Naive thymus-derived CD4-positive, alpha-beta T cell (primary cell): ENCODE measurements at regions of chr22 and their contacts with region 1.

Region 1: DNA sequence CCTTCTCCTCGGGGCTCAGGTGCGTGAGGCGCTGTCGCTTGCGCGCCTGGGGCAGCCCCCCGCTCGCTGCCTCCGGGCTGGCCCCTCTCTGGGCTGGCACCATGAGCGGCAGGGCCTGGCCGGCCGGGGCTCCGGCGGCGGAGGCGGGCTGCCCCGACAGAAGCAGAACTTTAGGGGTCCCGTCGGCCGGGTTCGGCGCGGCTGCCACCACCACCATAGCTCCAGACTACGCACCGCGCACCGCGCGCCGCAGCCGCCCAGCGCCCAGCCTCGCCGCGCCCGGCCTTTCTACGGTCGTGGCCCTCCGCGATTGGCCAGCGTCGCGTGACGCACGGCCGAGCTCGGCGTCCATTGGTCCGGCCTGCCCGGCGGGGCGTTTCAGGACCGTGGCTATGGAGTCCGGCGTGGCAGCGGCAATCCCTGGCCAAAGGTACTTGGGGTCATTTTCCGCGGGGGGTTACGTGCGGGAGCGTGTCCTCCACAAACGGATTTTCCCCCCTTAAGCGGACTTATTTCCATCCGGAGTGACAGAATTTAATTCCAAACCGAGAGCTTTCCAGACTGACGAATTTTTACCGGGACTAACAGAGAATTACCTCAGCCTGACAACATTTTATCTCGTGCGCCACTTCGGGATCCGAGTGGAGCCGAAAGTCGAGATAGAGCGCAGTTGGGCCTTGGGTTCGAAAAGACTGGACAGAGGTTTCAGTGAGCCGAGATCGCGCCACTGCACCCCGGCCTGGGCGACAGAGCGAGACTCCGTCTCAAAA is at the start of gene XBP1:
- DNase-seq: peak; percentile 82 to 94 (median 88)
- ATAC-seq: peak; percentile 96
- H3K4me3 ChIP-seq: peak within 1 kb of the TSS; percentile 81
- H3K4me3 Mint-ChIP-seq: peak within 1 kb of the TSS; percentile 91 to 99 (median 95)
- H3K27ac ChIP-seq: peak within 1 kb of the TSS; percentile 99
- H3K27ac Mint-ChIP-seq: peak within 1 kb of the TSS; percentile 90 to 100 (median 99)
- H3K4me1 ChIP-seq: peaks cover 24 to 41% of the 10 kb centered on the region in 2 donors
- H3K4me1 Mint-ChIP-seq: peaks cover 26 to 63% (median 50%) of the 10 kb centered on the region in 7 donors
- H3K27me3 ChIP-seq: no peaks in the 10 kb centered on the region
- H3K27me3 Mint-ChIP-seq: no peaks in the 10 kb centered on the region
- total RNA-seq, gene XBP1: 120 to 293 (median 144) TPM

Region 2: DNA sequence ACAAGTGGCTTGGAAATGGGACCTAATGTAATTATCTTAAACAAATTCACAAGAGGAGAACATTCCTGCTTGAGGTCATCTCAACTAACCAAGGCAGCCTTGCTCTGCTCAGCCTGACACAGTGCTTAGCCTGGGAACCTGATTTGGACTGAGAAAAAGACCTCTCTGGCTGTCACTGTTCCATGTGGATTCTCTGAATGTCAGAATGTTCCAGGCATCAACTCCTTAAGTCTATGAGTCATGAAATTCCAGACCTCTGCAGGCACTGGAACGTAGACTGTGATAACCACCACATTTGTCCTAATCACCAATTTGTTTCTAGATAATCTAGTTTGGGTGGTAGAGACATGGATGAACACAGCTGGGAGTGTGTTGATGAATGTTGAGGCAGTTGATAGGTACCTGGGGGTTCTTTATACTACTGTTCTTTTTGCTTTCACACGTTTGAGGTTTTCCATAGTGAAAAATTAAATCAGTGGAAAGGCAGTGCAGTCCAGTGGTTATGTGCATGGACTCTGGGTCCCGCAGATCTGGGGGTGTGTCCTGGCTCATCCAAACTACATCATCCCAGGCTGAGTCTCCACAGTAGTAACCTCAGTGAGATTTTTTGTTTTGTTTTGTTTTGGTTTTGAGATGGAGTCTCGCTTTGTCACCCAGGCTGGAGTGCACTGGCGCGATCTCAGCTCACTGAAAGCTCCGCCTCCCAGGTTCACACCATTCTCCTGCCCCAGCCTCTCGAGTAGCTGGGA is 1268.5 kb before region 1 on chr22:
- CTCF ChIA-PET with region 1: no interaction called
- POLR2A ChIA-PET with region 1: no interaction called
- intact Hi-C with region 1: no loop called
- DNase-seq: no peak
- ATAC-seq: no peak
- H3K4me3 ChIP-seq: no peak overlapping the region
- H3K4me3 Mint-ChIP-seq: no peak overlapping the region
- H3K27ac ChIP-seq: no peak overlapping the region
- H3K27ac Mint-ChIP-seq: no peak overlapping the region
- H3K4me1 ChIP-seq: no peaks in the 10 kb centered on the region
- H3K4me1 Mint-ChIP-seq: no peaks in the 10 kb centered on the region
- H3K27me3 ChIP-seq: no peaks in the 10 kb centered on the region
- H3K27me3 Mint-ChIP-seq: peaks cover 0 to 14% (median 5%) of the 10 kb centered on the region in 5 donors

Region 3: GRCh38 chr22:27919222-27919941 is 881.1 kb before region 1 on chr22 and contains the start of gene PITPNB:
- CTCF ChIA-PET with region 1: no interaction called
- POLR2A ChIA-PET with region 1: interaction called, 8 read pairs
- intact Hi-C with region 1: loop called (anchors 5 to 10 kb)
- DNase-seq: peak; percentile 97 to 100 (median 99)
- ATAC-seq: peak; percentile 95
- H3K4me3 ChIP-seq: peak within 1 kb of the TSS; percentile 84
- H3K4me3 Mint-ChIP-seq: peak within 1 kb of the TSS; percentile 97 to 100 (median 99)
- H3K27ac ChIP-seq: peak within 1 kb of the TSS; percentile 94
- H3K27ac Mint-ChIP-seq: peak within 1 kb of the TSS; percentile 93 to 99 (median 99)
- H3K4me1 ChIP-seq: peaks cover 29 to 32% of the 10 kb centered on the region in 2 donors
- H3K4me1 Mint-ChIP-seq: peaks cover 56 to 85% (median 75%) of the 10 kb centered on the region in 7 donors
- H3K27me3 ChIP-seq: no peaks in the 10 kb centered on the region
- H3K27me3 Mint-ChIP-seq: peaks cover 0 to 4% (median 0%) of the 10 kb centered on the region in 5 donors
- total RNA-seq, gene PITPNB: 56.3 to 98.8 (median 62.8) TPM

Region 4: GRCh38 chr22:28207281-28208030 is 593.0 kb before region 1 on chr22:
- CTCF ChIA-PET with region 1: no interaction called
- POLR2A ChIA-PET with region 1: no interaction called
- intact Hi-C with region 1: no loop called
- DNase-seq: no peak
- ATAC-seq: no peak
- H3K4me3 ChIP-seq: no peak overlapping the region
- H3K4me3 Mint-ChIP-seq: no peak overlapping the region
- H3K27ac ChIP-seq: no peak overlapping the region
- H3K27ac Mint-ChIP-seq: no peak overlapping the region
- H3K4me1 ChIP-seq: no peaks in the 10 kb centered on the region
- H3K4me1 Mint-ChIP-seq: no peaks in the 10 kb centered on the region
- H3K27me3 ChIP-seq: no peaks in the 10 kb centered on the region
- H3K27me3 Mint-ChIP-seq: peaks cover 0 to 16% (median 9%) of the 10 kb centered on the region in 5 donors

Region 5: DNA sequence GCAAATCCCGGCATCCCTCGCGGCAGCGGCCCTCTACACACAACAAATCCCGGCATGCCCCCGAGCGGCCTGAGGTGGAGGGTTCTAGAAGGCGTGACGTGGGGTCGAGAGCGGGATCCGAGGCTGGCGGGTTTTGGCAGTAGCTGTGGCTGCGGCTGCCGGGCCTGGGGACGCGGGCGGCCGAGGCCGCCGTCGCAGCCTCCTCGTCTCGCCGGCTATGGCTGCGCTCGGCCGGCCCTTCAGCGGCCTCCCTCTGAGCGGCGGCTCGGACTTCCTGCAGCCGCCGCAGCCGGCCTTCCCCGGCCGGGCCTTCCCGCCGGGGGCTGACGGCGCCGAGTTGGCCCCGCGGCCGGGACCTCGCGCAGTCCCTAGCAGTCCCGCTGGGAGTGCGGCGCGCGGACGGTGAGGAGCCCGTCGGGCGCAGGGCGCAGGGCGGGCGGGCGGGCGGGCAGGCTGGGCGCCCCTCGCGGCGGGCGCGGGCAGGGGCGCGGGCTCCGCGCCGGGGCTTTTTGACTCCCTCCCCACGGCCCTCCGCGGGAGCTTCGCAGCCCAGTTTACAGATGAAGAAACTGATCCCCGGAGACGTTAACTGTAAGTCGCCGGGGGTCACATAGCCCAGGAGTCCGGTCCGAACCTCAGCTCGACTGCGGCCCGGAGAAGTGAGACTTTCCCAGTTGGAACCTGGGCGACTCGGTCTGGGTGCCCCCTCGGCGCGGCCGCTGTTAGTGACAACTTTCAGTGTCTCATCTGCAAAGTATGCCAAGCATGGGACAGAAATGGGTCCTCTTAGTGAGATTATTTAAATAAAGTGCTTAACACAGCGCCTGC is 27.6 kb before region 1 on chr22 and contains the start of gene CCDC117:
- CTCF ChIA-PET with region 1: no interaction called
- POLR2A ChIA-PET with region 1: interaction called, 31 read pairs
- intact Hi-C with region 1: loop called (anchors 1 kb)
- DNase-seq: peak; percentile 76 to 93 (median 88)
- ATAC-seq: peak; percentile 97
- H3K4me3 ChIP-seq: peak within 1 kb of the TSS; percentile 83
- H3K4me3 Mint-ChIP-seq: peak within 1 kb of the TSS; percentile 84 to 100 (median 97)
- H3K27ac ChIP-seq: peak within 1 kb of the TSS; percentile 91
- H3K27ac Mint-ChIP-seq: peak within 1 kb of the TSS; percentile 86 to 98 (median 91)
- H3K4me1 ChIP-seq: peaks cover 13 to 17% of the 10 kb centered on the region in 2 donors
- H3K4me1 Mint-ChIP-seq: peaks cover 17 to 46% (median 31%) of the 10 kb centered on the region in 7 donors
- H3K27me3 ChIP-seq: no peaks in the 10 kb centered on the region
- H3K27me3 Mint-ChIP-seq: peaks cover 0 to 2% (median 0%) of the 10 kb centered on the region in 5 donors
- total RNA-seq, gene CCDC117: 13.5 to 33.5 (median 21.2) TPM

Region 6: GRCh38 chr22:28810821-28811491 is 10.5 kb after region 1 on chr22:
- CTCF ChIA-PET with region 1: interaction called, 26 read pairs
- POLR2A ChIA-PET with region 1: interaction called, 194 read pairs
- intact Hi-C with region 1: loop called (anchors 1 kb)
- DNase-seq: peak in 7 of 9 donors; percentile 26 to 67 (median 55)
- ATAC-seq: peak; percentile 58
- H3K4me3 ChIP-seq: peak overlapping the region; percentile 54
- H3K4me3 Mint-ChIP-seq: peak overlapping the region; percentile 78 to 91 (median 86)
- H3K27ac ChIP-seq: peak overlapping the region; percentile 62
- H3K27ac Mint-ChIP-seq: peak overlapping the region; percentile 91 to 96 (median 94)
- H3K4me1 ChIP-seq: peaks cover 42 to 58% of the 10 kb centered on the region in 2 donors
- H3K4me1 Mint-ChIP-seq: peaks cover 62 to 89% (median 75%) of the 10 kb centered on the region in 7 donors
- H3K27me3 ChIP-seq: no peaks in the 10 kb centered on the region
- H3K27me3 Mint-ChIP-seq: no peaks in the 10 kb centered on the region

Region 7: DNA sequence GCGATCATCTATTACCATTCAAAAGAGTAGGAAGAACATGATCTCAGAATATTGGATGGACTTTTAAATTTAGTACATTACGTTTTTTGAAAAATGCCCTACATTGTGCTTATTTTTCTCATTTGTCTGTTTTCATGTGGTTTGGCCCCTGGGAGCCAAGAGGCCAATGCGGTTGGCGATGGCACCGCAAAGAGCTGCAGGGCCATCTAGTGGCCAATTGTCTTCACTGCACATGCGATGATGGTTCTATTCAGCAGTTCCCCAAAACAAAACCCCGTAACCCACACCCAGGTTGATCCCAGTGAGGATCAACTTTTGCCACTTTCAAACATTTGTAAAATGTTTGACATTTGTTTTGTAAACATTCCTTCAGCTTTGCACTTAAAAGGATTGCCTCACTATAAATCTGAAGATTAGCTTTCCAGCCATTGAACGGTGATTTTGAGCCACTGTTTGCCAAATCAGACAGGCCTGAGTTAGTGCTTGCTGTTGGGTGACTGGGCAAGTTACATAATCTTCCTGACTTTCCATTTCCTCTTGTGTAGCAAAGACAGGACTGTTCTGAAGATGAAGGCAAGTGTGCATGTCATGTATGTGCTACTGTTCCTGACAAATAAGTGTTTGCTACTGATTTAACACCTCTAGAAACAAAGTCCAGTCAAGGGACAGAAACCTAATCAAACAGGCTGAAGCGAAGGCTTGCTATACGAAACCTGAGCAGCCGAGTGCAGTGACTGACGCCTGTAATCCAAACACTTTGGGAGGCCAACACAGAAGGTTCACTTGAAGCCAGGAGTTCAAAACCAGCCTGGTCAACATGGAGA is 29.1 kb after region 1 on chr22:
- CTCF ChIA-PET with region 1: interaction called, 11 read pairs
- POLR2A ChIA-PET with region 1: interaction called, 105 read pairs
- intact Hi-C with region 1: loop called (anchors 1 kb)
- DNase-seq: peak; percentile 50 to 74 (median 69)
- ATAC-seq: peak; percentile 95
- H3K4me3 ChIP-seq: no peak overlapping the region
- H3K4me3 Mint-ChIP-seq: peak overlapping the region; percentile 39 to 75 (median 59)
- H3K27ac ChIP-seq: no peak overlapping the region
- H3K27ac Mint-ChIP-seq: peak overlapping the region in 6 of 9 donors; percentile 33 to 87 (median 66)
- H3K4me1 ChIP-seq: peaks cover 6 to 7% of the 10 kb centered on the region in 2 donors
- H3K4me1 Mint-ChIP-seq: peaks cover 8 to 44% (median 27%) of the 10 kb centered on the region in 7 donors
- H3K27me3 ChIP-seq: no peaks in the 10 kb centered on the region
- H3K27me3 Mint-ChIP-seq: no peaks in the 10 kb centered on the region